Left colon (tissue), 2 donors: ENCODE measurements at regions of chr4 and their contacts with region 1.

Region 1: GRCh38 chr4:54228056-54228527 is 1.0 kb upstream of the PDGFRA start:
- DNase-seq: peak in 1 of 2 donors; percentile 63
- ATAC-seq: peak; percentile 58

Region 2: DNA sequence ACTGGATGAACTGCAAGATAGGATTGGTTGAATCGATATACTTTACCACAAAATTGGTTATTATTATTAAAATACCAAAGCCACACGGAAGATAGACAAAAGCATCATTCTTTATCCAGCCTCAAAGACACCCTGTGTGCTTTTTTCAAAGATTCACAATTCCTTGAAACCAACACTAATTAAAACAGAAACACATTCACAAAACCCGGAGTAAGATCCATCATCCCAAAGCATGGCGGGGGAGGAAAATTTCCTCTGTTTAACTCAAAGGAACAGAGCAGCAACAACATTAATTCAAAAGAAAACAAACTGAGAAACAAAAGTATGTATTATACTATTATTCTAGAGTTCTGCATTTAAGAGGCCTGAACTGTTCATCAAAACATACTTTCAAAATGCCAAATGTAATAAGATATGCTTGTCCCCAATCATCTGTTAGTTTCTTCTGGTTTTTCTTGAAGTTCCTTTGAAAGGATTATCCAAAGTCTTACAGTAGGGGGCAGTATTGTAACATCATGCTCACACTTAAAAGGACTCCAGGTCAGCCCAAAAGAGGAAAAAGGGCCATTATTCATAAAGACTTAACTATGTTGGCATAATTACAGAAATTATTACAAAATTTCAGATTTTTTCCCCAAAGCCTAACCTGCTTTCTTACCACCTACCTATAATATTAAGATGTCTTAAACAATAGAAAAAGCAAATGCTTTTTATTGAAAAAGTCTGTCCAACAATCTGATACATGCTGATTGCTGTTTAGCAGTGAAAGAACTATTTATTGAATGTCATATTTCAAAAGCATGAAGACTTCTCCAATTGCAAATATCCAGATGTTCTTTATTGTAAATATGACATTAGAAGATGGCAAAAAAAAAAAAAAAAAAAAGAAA is 1031.0 kb before region 1 on chr4:
- intact Hi-C with region 1: loop called in 1 of 2 experiments (anchors 10 kb)
- DNase-seq: no peak
- ATAC-seq: peak; percentile 67

Region 3: DNA sequence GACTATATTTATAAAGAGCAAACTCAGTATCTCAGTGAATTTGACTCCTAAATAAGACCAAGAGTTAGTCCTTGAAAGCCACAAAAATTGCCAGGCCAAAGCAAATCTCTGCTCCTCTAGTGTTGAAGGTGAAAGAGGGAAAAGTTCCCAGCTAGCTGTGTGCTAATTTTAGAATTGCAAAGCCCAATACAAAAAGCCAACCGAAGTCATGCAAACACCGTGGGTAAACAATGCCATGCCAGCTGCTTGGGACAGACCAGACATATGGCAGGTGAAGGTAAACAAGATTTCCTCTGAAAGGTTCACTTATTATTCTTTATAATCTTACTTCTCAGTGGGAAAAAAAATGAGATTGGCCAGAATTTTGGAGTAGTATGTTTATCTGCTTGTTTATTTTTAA is 556.3 kb before region 1 on chr4:
- intact Hi-C with region 1: no loop called
- DNase-seq: no peak
- ATAC-seq: peak; percentile 80

Region 4: GRCh38 chr4:53706422-53707032 is 521.6 kb before region 1 on chr4:
- intact Hi-C with region 1: loop called in 1 of 2 experiments (anchors 5 kb)
- DNase-seq: no peak
- ATAC-seq: peak; percentile 30

Region 5: GRCh38 chr4:53908661-53909078 is 319.4 kb before region 1 on chr4:
- intact Hi-C with region 1: loop called in 1 of 2 experiments (anchors 10 kb)
- DNase-seq: no peak
- ATAC-seq: peak; percentile 92

Region 6: DNA sequence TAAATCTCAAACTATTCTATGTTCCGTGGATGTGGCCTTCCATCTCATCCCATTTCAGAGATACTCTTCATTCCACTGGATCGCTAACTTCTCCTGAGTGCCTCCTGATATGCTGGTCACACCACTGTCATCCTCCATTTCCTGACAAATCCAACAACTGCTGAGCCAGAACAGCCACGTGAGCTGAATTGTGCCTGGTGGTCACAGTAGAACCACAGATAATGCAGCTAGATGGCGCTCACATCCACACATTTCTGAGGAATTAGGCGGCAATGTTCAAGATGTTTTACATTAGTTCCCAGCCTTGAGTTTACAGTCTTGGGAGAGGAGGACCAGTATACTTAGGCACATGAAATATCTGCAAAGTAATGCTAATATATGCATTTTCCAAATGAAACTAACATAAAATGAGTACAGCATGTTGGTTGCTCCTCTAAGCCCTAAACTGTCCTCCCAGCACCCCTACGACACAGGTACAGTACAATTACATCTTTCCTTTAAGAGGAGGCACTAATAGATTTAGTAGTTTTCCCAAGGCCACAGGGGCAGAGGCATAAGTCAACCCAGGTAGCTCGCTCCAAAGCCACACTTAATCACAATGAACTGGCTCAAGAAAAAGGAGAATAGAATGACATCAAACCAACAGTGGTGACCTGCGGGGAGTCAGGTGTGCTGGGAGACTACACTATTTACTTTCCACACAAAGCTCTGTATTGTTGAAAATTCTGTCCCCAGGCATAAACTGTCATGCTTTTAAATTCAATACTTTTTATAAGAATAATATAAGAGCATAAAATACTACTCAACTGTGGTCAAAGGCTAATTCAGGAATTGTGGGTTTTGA is 297.9 kb before region 1 on chr4:
- intact Hi-C with region 1: loop called in 1 of 2 experiments (anchors 10 kb)
- DNase-seq: peak; percentile 63 to 75
- ATAC-seq: peak; percentile 88

Region 7: GRCh38 chr4:53997901-53998300 is 230.2 kb before region 1 on chr4:
- intact Hi-C with region 1: no loop called
- DNase-seq: no peak
- ATAC-seq: no peak